WTC11 (cell line): ENCODE measurements at regions of chr6 and their contacts with region 1.

Region 1: DNA sequence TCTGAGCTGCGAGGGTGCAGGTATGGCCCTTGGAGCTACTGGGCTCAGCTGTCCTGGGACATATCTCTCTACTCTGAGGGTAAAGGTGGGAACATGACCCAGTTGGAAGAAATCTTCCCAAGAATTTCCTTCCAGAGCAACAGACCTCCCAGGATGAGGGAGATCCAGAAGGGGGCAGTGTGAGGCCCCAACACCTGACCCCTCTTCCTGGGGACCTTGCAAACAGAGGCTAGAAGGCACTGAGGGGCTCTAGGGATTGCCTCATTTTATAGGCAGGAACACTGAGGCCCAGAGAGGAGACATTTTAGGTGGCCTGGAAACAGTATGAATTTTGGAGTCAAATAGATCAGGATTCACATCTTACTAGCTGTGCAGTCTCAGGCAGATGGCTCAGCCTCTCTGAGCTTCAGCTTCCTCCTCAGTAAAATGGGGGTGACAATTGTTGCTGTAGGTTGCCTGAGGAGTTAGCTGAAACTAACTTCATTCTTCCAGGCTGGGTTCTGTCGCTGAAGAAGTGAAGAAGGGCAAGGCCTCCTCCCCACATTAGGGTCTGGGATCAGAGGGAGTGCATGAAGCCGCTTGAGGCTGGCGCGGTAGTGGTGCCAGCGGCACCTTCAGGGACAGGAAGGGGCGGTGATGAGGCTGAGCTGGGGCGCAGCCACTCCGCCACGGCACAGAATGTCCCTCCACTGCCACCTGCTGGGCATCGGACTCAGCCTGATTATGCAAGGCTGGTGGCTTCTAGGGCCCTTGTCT is 11.4 kb downstream of the KCNK17 start:
- DNase-seq: peak; percentile 95
- ATAC-seq: peak; percentile 86
- H3K4me3 Mint-ChIP-seq: peak overlapping the region; percentile 21
- H3K27ac Mint-ChIP-seq: no peak overlapping the region
- H3K4me1 Mint-ChIP-seq: peaks cover 17% of the 10 kb centered on the region
- H3K27me3 Mint-ChIP-seq: no peaks in the 10 kb centered on the region; the same call in 1 of the 2 replicates
- CTCF ChIP-seq: peak; percentile 59

Region 2: DNA sequence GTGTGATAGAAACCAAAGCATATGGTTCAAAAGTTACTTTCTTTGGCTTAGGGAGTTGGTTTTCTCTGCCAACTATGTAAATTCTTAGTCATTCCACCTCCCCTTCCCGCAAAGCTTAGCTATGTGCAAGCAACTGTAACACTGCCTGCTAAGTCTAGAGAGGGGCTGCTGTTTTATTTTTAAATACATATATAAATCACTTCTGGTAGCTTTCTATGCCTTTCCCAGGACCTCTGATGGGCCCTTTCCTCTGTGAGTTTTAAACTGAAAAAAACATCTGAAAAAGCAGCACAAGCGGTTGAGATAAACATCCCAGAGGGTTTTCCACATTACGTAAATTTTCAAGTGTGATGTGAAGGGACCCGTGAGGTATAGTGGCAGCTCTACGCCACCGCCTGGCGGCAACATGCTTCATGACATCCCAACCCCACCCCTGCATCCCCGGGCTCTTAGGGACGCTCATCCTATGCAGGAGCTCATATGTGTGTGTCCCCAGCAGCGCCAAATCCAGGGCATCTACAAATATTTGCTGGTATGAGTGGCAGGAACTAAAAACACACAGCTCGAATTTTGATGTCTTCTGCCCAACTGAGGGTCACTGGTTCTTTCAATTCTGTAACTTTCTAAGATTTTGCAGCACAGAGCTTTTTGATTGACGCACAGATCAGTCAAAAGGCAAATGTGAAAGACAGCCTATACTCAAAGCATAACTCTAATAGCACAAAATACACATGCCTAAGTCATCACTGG is 200.6 kb before region 1 on chr6:
- CTCF ChIA-PET with region 1: interaction called, 24 read pairs
- POLR2A ChIA-PET with region 1: no interaction called
- DNase-seq: peak; percentile 79
- ATAC-seq: peak; percentile 99
- H3K4me3 Mint-ChIP-seq: no peak overlapping the region
- H3K27ac Mint-ChIP-seq: no peak overlapping the region
- H3K4me1 Mint-ChIP-seq: peaks cover 6% of the 10 kb centered on the region; the same call in 1 of the 2 replicates
- H3K27me3 Mint-ChIP-seq: no peaks in the 10 kb centered on the region
- CTCF ChIP-seq: peak; percentile 60

Region 3: DNA sequence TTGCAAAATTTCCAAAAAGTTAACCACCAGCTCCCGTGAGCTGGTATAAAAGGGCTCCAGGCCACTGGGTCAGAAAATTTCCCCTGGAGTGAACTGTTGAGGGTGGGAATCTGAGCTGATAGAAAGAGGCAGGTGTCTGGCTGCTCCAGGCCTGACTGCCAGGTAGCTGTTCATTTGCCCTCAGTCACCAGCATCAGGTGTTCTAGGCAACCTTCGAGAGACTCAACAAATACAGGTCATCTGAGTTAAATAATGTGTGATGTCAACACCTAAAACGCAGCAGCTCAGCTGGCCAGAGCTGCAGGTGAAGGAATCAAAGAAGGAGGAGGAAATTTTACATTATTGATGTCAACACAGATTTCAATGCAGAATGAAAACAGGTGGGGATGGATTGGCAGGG is 120.2 kb before region 1 on chr6:
- CTCF ChIA-PET with region 1: interaction called, 204 read pairs
- POLR2A ChIA-PET with region 1: no interaction called
- DNase-seq: no peak
- ATAC-seq: no peak
- H3K4me3 Mint-ChIP-seq: no peak overlapping the region
- H3K27ac Mint-ChIP-seq: peak overlapping the region; percentile 66; the same call in 1 of the 2 replicates
- H3K4me1 Mint-ChIP-seq: no peaks in the 10 kb centered on the region
- H3K27me3 Mint-ChIP-seq: no peaks in the 10 kb centered on the region; the same call in none of the 2 replicates
- CTCF ChIP-seq: no peak

Region 4: GRCh38 chr6:39203852-39204375 is 98.9 kb before region 1 on chr6:
- CTCF ChIA-PET with region 1: interaction called, 51 read pairs
- POLR2A ChIA-PET with region 1: no interaction called
- DNase-seq: peak; percentile 33
- ATAC-seq: peak; percentile 29
- H3K4me3 Mint-ChIP-seq: no peak overlapping the region
- H3K27ac Mint-ChIP-seq: peak overlapping the region; percentile 97
- H3K4me1 Mint-ChIP-seq: peaks cover 82% of the 10 kb centered on the region
- H3K27me3 Mint-ChIP-seq: no peaks in the 10 kb centered on the region
- CTCF ChIP-seq: no peak

Region 5: GRCh38 chr6:39228992-39229767 is 73.7 kb before region 1 on chr6 and contains the start of gene KCNK5:
- CTCF ChIA-PET with region 1: interaction called, 122 read pairs
- POLR2A ChIA-PET with region 1: no interaction called
- DNase-seq: peak; percentile 92
- ATAC-seq: peak; percentile 87
- H3K4me3 Mint-ChIP-seq: peak within 1 kb of the TSS; percentile 89
- H3K27ac Mint-ChIP-seq: peak within 1 kb of the TSS; percentile 91
- H3K4me1 Mint-ChIP-seq: peaks cover 83% of the 10 kb centered on the region
- H3K27me3 Mint-ChIP-seq: no peaks in the 10 kb centered on the region
- CTCF ChIP-seq: peak; percentile 74
- total RNA-seq, gene KCNK5: 31.7 to 41.8 TPM (median 34.3 TPM) in 3 replicates

Region 6: DNA sequence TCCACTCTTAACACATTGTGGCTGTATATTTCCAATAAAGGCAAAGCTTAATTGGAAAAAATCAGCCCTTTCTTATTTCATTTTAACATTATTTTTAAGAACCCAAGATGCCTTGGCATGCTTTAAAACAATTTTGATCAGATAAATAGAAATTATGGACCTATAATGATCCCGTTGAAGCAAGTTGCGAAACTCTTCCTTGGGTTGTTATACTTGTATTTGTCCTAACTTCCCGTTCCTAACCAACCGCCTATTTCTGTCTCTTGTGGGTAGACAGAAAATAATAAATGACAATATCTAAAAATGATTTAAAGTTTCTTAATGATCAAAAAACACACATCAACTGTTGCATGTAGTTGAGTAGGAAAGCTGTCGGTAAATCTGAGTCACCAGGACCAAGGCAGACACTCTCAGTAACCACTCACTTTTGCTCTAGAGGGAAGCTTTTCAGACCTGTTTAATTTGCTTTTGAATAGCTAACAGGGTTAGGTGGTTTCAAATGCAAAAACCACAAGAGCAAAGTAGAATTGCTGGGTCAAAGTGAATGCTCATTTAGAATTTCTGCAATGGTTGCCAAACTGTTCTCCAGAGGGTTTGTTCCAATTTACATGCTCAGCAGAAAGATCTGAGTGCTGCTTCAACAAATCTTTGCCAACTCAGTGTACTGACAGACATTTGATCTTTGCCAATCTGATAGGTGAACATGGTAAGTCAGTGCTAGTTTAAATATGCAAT is 39.4 kb before region 1 on chr6:
- CTCF ChIA-PET with region 1: interaction called, 17 read pairs
- POLR2A ChIA-PET with region 1: no interaction called
- DNase-seq: no peak
- ATAC-seq: peak; percentile 95
- H3K4me3 Mint-ChIP-seq: peak overlapping the region; percentile 55
- H3K27ac Mint-ChIP-seq: peak overlapping the region; percentile 98
- H3K4me1 Mint-ChIP-seq: peaks cover 64% of the 10 kb centered on the region
- H3K27me3 Mint-ChIP-seq: peaks cover 6% of the 10 kb centered on the region
- CTCF ChIP-seq: no peak

Region 7: GRCh38 chr6:39289490-39289889 is 13.4 kb before region 1 on chr6:
- CTCF ChIA-PET with region 1: interaction called, 31 read pairs
- POLR2A ChIA-PET with region 1: no interaction called
- DNase-seq: no peak
- ATAC-seq: no peak
- H3K4me3 Mint-ChIP-seq: no peak overlapping the region
- H3K27ac Mint-ChIP-seq: no peak overlapping the region
- H3K4me1 Mint-ChIP-seq: peaks cover 41% of the 10 kb centered on the region
- H3K27me3 Mint-ChIP-seq: peaks cover 12% of the 10 kb centered on the region
- CTCF ChIP-seq: no peak

Region 8: GRCh38 chr6:39361657-39362486 is 59.0 kb after region 1 on chr6:
- CTCF ChIA-PET with region 1: no interaction called
- POLR2A ChIA-PET with region 1: no interaction called
- DNase-seq: peak; percentile 83
- ATAC-seq: peak; percentile 96
- H3K4me3 Mint-ChIP-seq: no peak overlapping the region
- H3K27ac Mint-ChIP-seq: no peak overlapping the region
- H3K4me1 Mint-ChIP-seq: peaks cover 12% of the 10 kb centered on the region
- H3K27me3 Mint-ChIP-seq: peaks cover 12% of the 10 kb centered on the region
- CTCF ChIP-seq: peak; percentile 64; the same call in 1 of the 2 replicates